ENCODE measurements at regions of chr3 and their contacts with region 1.

Region 1: GRCh38 chr3:102113411-102114041 is 264.2 kb downstream of the NFKBIZ start:
- DNase-seq: peak in 1 of 9 donors; percentile 16
- ATAC-seq: no peak
- H3K4me3 ChIP-seq: no peak overlapping the region
- H3K4me3 Mint-ChIP-seq: peak overlapping the region in 9 of 10 donors; percentile 6 to 63 (median 26)
- H3K27ac ChIP-seq: peak overlapping the region; percentile 69
- H3K27ac Mint-ChIP-seq: peak overlapping the region; percentile 88 to 99 (median 93)
- H3K4me1 ChIP-seq: peaks cover 0 to 29% of the 10 kb centered on the region in 2 donors
- H3K4me1 Mint-ChIP-seq: peaks cover 9 to 61% (median 44%) of the 10 kb centered on the region in 7 donors
- H3K27me3 ChIP-seq: no peaks in the 10 kb centered on the region
- H3K27me3 Mint-ChIP-seq: no peaks in the 10 kb centered on the region

Region 2: DNA sequence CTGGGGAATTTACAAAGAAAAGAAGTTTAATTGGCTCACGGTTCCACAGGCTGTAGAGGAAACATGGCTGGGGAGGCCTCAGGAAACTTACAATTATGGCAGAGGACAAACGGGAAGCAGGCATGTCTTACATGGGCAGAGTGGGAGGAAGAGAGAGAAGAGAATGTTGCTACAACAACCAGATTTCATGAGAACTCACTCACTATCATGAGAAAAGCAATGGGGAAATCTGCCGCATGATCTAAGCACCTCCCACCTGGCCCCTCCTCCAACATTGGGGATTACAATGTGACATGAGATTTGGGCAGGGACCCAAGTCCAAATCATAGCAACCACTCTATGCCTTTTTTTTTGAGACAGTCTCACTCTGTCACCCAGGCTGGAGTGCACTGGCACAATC is 510.8 kb before region 1 on chr3:
- CTCF ChIA-PET with region 1: no interaction called
- POLR2A ChIA-PET with region 1: no interaction called
- intact Hi-C with region 1: no loop called
- DNase-seq: no peak
- ATAC-seq: no peak
- H3K4me3 ChIP-seq: no peak overlapping the region
- H3K4me3 Mint-ChIP-seq: no peak overlapping the region
- H3K27ac ChIP-seq: no peak overlapping the region
- H3K27ac Mint-ChIP-seq: peak overlapping the region in 2 of 9 donors; percentile 7 to 22
- H3K4me1 ChIP-seq: no peaks in the 10 kb centered on the region
- H3K4me1 Mint-ChIP-seq: peaks cover 0 to 4% (median 0%) of the 10 kb centered on the region in 7 donors
- H3K27me3 ChIP-seq: no peaks in the 10 kb centered on the region
- H3K27me3 Mint-ChIP-seq: no peaks in the 10 kb centered on the region

Region 3: GRCh38 chr3:101685870-101686412 is 427.6 kb before region 1 on chr3:
- CTCF ChIA-PET with region 1: no interaction called
- POLR2A ChIA-PET with region 1: no interaction called
- intact Hi-C with region 1: loop called in 1 of 2 experiments (anchors 2 kb)
- DNase-seq: peak in 2 of 9 donors; percentile 21 to 24
- ATAC-seq: peak; percentile 1
- H3K4me3 ChIP-seq: peak overlapping the region; percentile 72
- H3K4me3 Mint-ChIP-seq: peak overlapping the region; percentile 90 to 100 (median 98)
- H3K27ac ChIP-seq: peak overlapping the region; percentile 92
- H3K27ac Mint-ChIP-seq: peak overlapping the region; percentile 94 to 100 (median 99)
- H3K4me1 ChIP-seq: peaks cover 24 to 25% of the 10 kb centered on the region in 2 donors
- H3K4me1 Mint-ChIP-seq: peaks cover 20 to 58% (median 41%) of the 10 kb centered on the region in 7 donors
- H3K27me3 ChIP-seq: no peaks in the 10 kb centered on the region
- H3K27me3 Mint-ChIP-seq: no peaks in the 10 kb centered on the region

Region 4: GRCh38 chr3:101827211-101828174 is 286.0 kb before region 1 on chr3:
- CTCF ChIA-PET with region 1: no interaction called
- POLR2A ChIA-PET with region 1: no interaction called
- intact Hi-C with region 1: loop called (anchors 5 kb)
- DNase-seq: peak; percentile 52 to 86 (median 73)
- ATAC-seq: peak; percentile 86
- H3K4me3 ChIP-seq: peak overlapping the region; percentile 66
- H3K4me3 Mint-ChIP-seq: peak overlapping the region; percentile 85 to 97 (median 95)
- H3K27ac ChIP-seq: peak overlapping the region; percentile 88
- H3K27ac Mint-ChIP-seq: peak overlapping the region; percentile 94 to 99 (median 97)
- H3K4me1 ChIP-seq: peaks cover 13 to 28% of the 10 kb centered on the region in 2 donors
- H3K4me1 Mint-ChIP-seq: peaks cover 31 to 76% (median 63%) of the 10 kb centered on the region in 7 donors
- H3K27me3 ChIP-seq: no peaks in the 10 kb centered on the region
- H3K27me3 Mint-ChIP-seq: no peaks in the 10 kb centered on the region

Region 5: DNA sequence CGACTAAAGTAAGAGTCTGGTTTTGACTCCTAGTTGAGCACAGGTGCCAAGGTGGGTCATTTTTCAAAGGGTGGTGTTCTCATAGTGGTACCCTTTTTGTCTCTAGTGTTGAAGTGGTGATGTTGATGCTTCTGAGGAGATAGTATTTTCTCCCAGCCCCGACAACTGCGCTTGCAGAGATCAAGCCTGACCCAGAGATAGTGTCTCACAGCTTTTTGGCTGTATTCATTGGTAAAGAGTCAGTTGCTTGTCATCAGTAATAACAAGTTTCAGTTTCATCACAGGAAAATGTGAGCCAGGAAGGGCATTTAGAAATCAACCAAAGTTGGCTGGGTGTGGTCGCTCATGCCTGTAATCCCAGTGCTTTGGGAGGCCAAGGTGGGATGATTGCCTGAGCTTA is 124.9 kb before region 1 on chr3:
- CTCF ChIA-PET with region 1: no interaction called
- POLR2A ChIA-PET with region 1: no interaction called
- intact Hi-C with region 1: loop called in 1 of 2 experiments (anchors 2 kb)
- DNase-seq: no peak
- ATAC-seq: no peak
- H3K4me3 ChIP-seq: no peak overlapping the region
- H3K4me3 Mint-ChIP-seq: peak overlapping the region in 1 of 10 donors; percentile 15
- H3K27ac ChIP-seq: no peak overlapping the region
- H3K27ac Mint-ChIP-seq: peak overlapping the region in 1 of 9 donors; percentile 62
- H3K4me1 ChIP-seq: peaks cover 0 to 6% of the 10 kb centered on the region in 2 donors
- H3K4me1 Mint-ChIP-seq: peaks cover 4 to 32% (median 16%) of the 10 kb centered on the region in 7 donors
- H3K27me3 ChIP-seq: no peaks in the 10 kb centered on the region
- H3K27me3 Mint-ChIP-seq: peaks cover 0 to 20% (median 0%) of the 10 kb centered on the region in 5 donors

Region 6: DNA sequence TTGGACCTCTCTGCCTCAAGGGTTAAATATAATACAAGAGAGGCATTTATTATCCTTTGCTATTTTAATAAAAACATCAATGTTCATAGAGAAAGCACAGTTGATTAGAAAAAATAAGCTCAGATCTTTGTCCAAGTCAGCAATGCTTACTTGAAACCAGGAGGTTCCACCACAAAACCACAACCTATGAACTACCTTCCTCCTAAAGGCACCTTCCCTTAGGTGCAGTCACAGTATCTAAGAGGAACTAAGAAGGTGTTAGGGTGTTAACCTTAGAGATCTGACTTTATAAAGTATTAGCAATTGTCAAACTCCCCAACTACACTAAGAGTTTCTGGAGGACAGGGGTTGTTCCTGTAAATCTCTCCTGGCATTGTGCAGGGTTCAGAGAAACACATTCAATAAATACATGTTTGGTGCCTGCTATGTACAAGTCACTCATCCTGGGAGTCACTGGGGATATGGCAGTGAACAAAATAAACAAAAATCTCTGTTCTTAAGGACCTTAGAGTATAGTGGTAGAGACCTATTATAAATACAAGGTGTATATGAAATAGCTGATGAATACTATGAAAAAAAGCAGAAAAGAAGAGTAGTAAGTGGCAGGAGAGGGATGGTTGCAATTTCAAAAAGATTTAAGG is 55.6 kb before region 1 on chr3:
- CTCF ChIA-PET with region 1: no interaction called
- POLR2A ChIA-PET with region 1: interaction called, 5 read pairs
- intact Hi-C with region 1: loop called (anchors 1 to 2 kb)
- DNase-seq: peak in 7 of 9 donors; percentile 57 to 82 (median 72)
- ATAC-seq: peak; percentile 96
- H3K4me3 ChIP-seq: peak overlapping the region; percentile 5
- H3K4me3 Mint-ChIP-seq: peak overlapping the region; percentile 23 to 74 (median 44)
- H3K27ac ChIP-seq: peak overlapping the region; percentile 44
- H3K27ac Mint-ChIP-seq: peak overlapping the region; percentile 68 to 91 (median 84)
- H3K4me1 ChIP-seq: peaks cover 27 to 30% of the 10 kb centered on the region in 2 donors
- H3K4me1 Mint-ChIP-seq: peaks cover 26 to 56% (median 46%) of the 10 kb centered on the region in 7 donors
- H3K27me3 ChIP-seq: no peaks in the 10 kb centered on the region
- H3K27me3 Mint-ChIP-seq: no peaks in the 10 kb centered on the region

Region 7: GRCh38 chr3:102089904-102090492 is 23.5 kb before region 1 on chr3:
- CTCF ChIA-PET with region 1: interaction called, 3 read pairs
- POLR2A ChIA-PET with region 1: interaction called, 3 read pairs
- intact Hi-C with region 1: loop called in 1 of 2 experiments (anchors 1 kb)
- DNase-seq: no peak
- ATAC-seq: no peak
- H3K4me3 ChIP-seq: no peak overlapping the region
- H3K4me3 Mint-ChIP-seq: no peak overlapping the region
- H3K27ac ChIP-seq: no peak overlapping the region
- H3K27ac Mint-ChIP-seq: no peak overlapping the region
- H3K4me1 ChIP-seq: peaks cover 0 to 13% of the 10 kb centered on the region in 2 donors
- H3K4me1 Mint-ChIP-seq: peaks cover 12 to 51% (median 30%) of the 10 kb centered on the region in 7 donors
- H3K27me3 ChIP-seq: no peaks in the 10 kb centered on the region
- H3K27me3 Mint-ChIP-seq: peaks cover 0 to 5% (median 0%) of the 10 kb centered on the region in 5 donors

Region 8: GRCh38 chr3:102180291-102181039 is 66.9 kb after region 1 on chr3:
- CTCF ChIA-PET with region 1: no interaction called
- POLR2A ChIA-PET with region 1: interaction called, 5 read pairs
- intact Hi-C with region 1: loop called in 1 of 2 experiments (anchors 5 kb)
- DNase-seq: peak in 6 of 9 donors; percentile 21 to 52 (median 40)
- ATAC-seq: peak; percentile 68
- H3K4me3 ChIP-seq: no peak overlapping the region
- H3K4me3 Mint-ChIP-seq: no peak overlapping the region
- H3K27ac ChIP-seq: peak overlapping the region; percentile 73
- H3K27ac Mint-ChIP-seq: no peak overlapping the region
- H3K4me1 ChIP-seq: peaks cover 0 to 18% of the 10 kb centered on the region in 2 donors
- H3K4me1 Mint-ChIP-seq: peaks cover 0 to 12% (median 5%) of the 10 kb centered on the region in 7 donors
- H3K27me3 ChIP-seq: no peaks in the 10 kb centered on the region
- H3K27me3 Mint-ChIP-seq: no peaks in the 10 kb centered on the region

Region 9: DNA sequence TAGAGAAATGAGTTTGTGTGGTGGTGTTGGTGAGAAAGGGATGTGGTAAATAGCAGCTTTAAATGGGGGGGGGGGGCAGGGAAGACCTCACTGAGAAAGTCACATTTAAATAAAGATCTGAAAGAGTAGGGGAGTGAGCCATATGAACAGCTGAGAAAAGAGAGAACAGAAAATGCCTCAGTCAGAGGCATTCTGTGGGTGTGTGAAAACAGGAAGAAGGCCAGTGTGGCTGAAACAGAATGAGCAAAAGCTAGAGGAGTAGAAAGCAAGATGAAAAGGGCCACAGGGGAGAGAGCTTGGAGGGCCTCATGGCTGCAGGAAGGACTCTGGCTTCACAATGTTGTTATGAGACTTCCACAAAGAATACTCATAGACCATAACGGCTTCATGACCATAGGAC is 1104.6 kb after region 1 on chr3:
- CTCF ChIA-PET with region 1: no interaction called
- POLR2A ChIA-PET with region 1: no interaction called
- intact Hi-C with region 1: no loop called
- DNase-seq: no peak
- ATAC-seq: no peak
- H3K4me3 ChIP-seq: no peak overlapping the region
- H3K4me3 Mint-ChIP-seq: no peak overlapping the region
- H3K27ac ChIP-seq: no peak overlapping the region
- H3K27ac Mint-ChIP-seq: no peak overlapping the region
- H3K4me1 ChIP-seq: no peaks in the 10 kb centered on the region
- H3K4me1 Mint-ChIP-seq: no peaks in the 10 kb centered on the region
- H3K27me3 ChIP-seq: no peaks in the 10 kb centered on the region
- H3K27me3 Mint-ChIP-seq: no peaks in the 10 kb centered on the region